ENCODE measurements at regions of chr10 and their contacts with region 1.

Region 1: DNA sequence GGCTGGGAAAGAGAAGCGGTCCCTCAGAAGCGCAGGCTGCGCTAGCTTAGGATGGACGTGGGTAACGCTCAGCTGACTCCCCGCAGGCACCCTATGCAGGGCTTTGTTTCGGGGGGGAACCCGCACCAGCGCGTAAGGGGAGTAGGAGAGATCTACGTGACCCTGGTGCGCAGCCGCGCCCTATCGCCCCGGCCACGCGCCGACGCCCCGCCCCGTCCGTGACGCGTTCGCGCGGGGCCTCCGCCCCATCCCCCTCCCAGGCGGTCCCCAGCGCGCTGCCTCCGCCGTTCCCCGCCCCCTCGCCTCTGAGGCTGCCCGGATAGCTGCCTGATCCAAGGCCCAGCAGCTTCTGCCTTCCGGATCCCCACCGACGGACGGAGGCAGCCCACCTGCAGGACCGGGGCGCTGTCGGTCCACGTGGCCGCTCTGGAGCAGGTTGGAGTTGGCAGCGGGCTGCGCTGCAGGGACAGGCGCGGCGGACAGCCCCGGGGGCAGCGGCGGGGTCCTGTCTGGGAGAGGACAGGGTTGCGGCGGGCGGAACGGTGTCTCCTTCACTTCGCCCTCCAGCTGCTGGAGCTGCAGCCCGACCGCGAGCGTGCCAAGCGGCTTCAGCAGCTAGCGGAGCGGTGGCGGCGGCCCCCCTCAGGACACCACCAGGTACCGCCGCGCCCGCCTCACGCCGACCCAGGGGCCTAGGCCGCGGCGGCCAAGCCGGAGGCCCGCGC is at the start of gene VDAC2:
- DNase-seq: peak; percentile 86 to 94
- H3K4me3 ChIP-seq: peak within 1 kb of the TSS; percentile 62 to 97
- H3K27ac ChIP-seq: peak within 1 kb of the TSS; percentile 99
- H3K4me1 ChIP-seq: peaks cover 0 to 42% (median 23%) of the 10 kb centered on the region in 4 donors
- H3K27me3 ChIP-seq: no peaks in the 10 kb centered on the region
- CTCF ChIP-seq: no peak

Region 2: GRCh38 chr10:74967911-74968645 is 242.4 kb before region 1 on chr10:
- intact Hi-C with region 1: no loop called
- DNase-seq: no peak
- H3K4me3 ChIP-seq: no peak overlapping the region
- H3K27ac ChIP-seq: no peak overlapping the region
- H3K4me1 ChIP-seq: peaks cover 0 to 14% (median 5%) of the 10 kb centered on the region in 4 donors
- H3K27me3 ChIP-seq: no peaks in the 10 kb centered on the region
- CTCF ChIP-seq: no peak

Region 3: DNA sequence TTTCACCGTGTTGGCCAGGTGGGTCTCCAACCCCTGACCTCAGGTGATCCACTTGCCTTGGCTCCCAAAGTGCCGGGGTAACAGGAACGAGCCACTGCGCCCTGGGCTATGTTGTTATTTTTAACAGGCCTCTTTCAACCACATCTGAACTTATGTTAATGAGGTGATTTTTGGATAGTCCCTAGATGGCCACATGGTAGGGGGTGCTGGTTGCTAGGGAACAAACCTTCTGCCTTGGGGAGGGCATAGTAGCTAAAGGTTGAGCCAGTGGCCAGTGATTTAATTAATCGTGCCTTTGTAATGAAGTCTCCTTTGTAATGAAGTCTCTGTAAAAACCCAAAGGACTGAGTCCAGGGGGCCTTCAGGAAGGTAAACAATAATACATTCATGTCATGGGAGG is 16.2 kb after region 1 on chr10:
- intact Hi-C with region 1: loop called (anchors 1 kb)
- DNase-seq: no peak
- H3K4me3 ChIP-seq: no peak overlapping the region
- H3K27ac ChIP-seq: peak overlapping the region; percentile 74 to 80
- H3K4me1 ChIP-seq: peaks cover 0 to 73% (median 49%) of the 10 kb centered on the region in 4 donors
- H3K27me3 ChIP-seq: no peaks in the 10 kb centered on the region
- CTCF ChIP-seq: no peak